ENCODE measurements at regions of chr14 and their contacts with region 1.

Region 1: GRCh38 chr14:24271134-24271833 is at the start of gene RABGGTA:
- DNase-seq: peak; percentile 94
- H3K4me3 Mint-ChIP-seq: peak within 1 kb of the TSS; percentile 78
- H3K27ac Mint-ChIP-seq: peak within 1 kb of the TSS; percentile 95
- H3K4me1 Mint-ChIP-seq: peaks cover 43% of the 10 kb centered on the region
- H3K27me3 Mint-ChIP-seq: no peaks in the 10 kb centered on the region
- total RNA-seq, gene RABGGTA: 74.9 to 76.2 TPM

Region 2: GRCh38 chr14:23555882-23556699 is 715.2 kb before region 1 on chr14 and contains the start of gene THTPA:
- CTCF ChIA-PET with region 1: no interaction called
- intact Hi-C with region 1: loop called (anchors 10 kb)
- DNase-seq: peak; percentile 96
- H3K4me3 Mint-ChIP-seq: peak within 1 kb of the TSS; percentile 95
- H3K27ac Mint-ChIP-seq: peak within 1 kb of the TSS; percentile 94
- H3K4me1 Mint-ChIP-seq: peaks cover 38% of the 10 kb centered on the region
- H3K27me3 Mint-ChIP-seq: no peaks in the 10 kb centered on the region
- total RNA-seq, gene THTPA: 6.2 to 6.6 TPM

Region 3: DNA sequence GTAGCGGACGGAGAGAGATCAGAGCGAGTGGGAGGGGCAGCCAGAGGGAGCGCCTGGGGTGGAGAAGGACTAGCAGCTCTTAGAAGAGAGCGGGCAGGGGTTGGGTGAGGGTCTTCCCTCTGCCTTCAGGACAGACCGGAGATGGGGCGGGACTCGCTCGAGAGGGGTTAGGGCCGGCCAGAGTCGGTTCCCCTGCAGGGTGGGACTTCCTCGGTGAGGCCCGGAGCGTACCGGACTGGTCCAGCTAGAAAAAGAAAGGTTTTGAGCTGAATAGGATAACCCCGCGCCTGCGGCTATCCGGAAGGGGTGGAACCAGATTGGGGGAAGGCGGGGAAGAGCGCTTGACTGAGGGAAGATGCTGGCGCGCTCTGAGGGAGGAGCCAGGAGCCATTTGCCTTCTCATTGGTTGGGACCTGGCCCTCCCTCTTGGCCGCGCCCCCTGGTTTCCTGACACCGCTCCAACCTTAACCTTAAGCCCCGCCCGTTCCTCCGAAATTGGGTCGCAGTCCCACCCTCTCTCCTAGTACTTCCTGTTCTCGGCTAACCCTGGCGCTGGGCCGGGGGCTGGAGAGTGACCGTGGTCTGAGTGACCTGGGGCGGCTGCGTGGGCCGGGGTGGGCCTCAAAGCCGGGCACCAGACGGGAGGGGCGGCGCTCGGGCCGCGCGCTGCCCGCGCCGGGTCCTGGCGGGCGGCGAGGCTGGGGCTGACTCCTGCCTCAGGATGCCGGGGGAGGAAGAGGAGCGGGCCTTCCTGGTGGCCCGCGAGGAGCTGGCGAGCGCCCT is 124.1 kb before region 1 on chr14 and contains the start of gene RNF31:
- CTCF ChIA-PET with region 1: no interaction called
- intact Hi-C with region 1: loop called (anchors 1 kb)
- DNase-seq: peak; percentile 99
- H3K4me3 Mint-ChIP-seq: peak within 1 kb of the TSS; percentile 97
- H3K27ac Mint-ChIP-seq: peak within 1 kb of the TSS; percentile 99
- H3K4me1 Mint-ChIP-seq: peaks cover 54% of the 10 kb centered on the region
- H3K27me3 Mint-ChIP-seq: no peaks in the 10 kb centered on the region
- total RNA-seq, gene RNF31: 51.1 to 53.8 TPM

Region 4: GRCh38 chr14:24232121-24232644 is 39.1 kb before region 1 on chr14 and contains the start of gene NEDD8:
- CTCF ChIA-PET with region 1: interaction called, 4 read pairs
- intact Hi-C with region 1: loop called (anchors 1 kb)
- DNase-seq: peak; percentile 96
- H3K4me3 Mint-ChIP-seq: peak within 1 kb of the TSS; percentile 98
- H3K27ac Mint-ChIP-seq: peak within 1 kb of the TSS; percentile 97
- H3K4me1 Mint-ChIP-seq: peaks cover 52% of the 10 kb centered on the region
- H3K27me3 Mint-ChIP-seq: no peaks in the 10 kb centered on the region
- total RNA-seq, gene NEDD8: 172 to 196 TPM

Region 5: DNA sequence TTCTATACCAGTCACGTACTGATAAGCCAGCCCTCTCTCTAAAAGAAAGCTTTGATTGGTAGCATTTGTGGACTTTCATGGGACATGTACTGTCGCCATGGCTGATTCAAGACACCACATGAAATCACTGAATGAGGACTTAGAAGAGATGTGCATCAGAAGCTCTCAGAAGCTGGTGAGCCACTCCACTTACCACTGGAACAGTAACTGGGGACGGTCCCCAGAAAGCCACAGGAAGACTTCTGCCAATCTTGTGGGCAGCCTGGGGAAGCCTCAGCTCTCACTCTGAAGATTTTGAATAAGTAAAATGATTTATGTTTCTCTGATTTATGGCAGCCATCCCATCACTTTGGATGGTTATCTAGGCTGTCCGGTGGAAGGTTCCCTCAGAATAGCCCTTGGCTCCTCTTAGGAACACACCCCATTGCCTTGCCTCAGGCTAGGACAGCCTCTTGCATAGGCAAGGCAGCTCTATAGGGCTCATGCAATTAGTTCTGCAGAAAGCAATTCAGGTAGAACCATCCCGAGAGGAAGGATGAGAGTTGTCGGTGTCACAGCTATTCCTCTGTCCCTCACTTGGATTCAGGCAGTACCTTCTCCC is 18.5 kb after region 1 on chr14:
- CTCF ChIA-PET with region 1: interaction called, 154 read pairs
- intact Hi-C with region 1: loop called (anchors 1 kb)
- DNase-seq: peak; percentile 93
- H3K4me3 Mint-ChIP-seq: no peak overlapping the region
- H3K27ac Mint-ChIP-seq: peak overlapping the region; percentile 75
- H3K4me1 Mint-ChIP-seq: peaks cover 25% of the 10 kb centered on the region
- H3K27me3 Mint-ChIP-seq: no peaks in the 10 kb centered on the region

Region 6: GRCh38 chr14:24332268-24332993 is 61.1 kb after region 1 on chr14:
- CTCF ChIA-PET with region 1: interaction called, 5 read pairs
- intact Hi-C with region 1: loop called (anchors 1 kb)
- DNase-seq: peak; percentile 91
- H3K4me3 Mint-ChIP-seq: peak overlapping the region; percentile 71
- H3K27ac Mint-ChIP-seq: no peak overlapping the region
- H3K4me1 Mint-ChIP-seq: peaks cover 28% of the 10 kb centered on the region
- H3K27me3 Mint-ChIP-seq: peaks cover 24% of the 10 kb centered on the region

Measured in activated naive CD4-positive, alpha-beta T cell treated with anti-CD3 and anti-CD28 coated beads for 36 hours (primary cell).